Motor neuron (in vitro differentiated cells): ENCODE measurements at regions of chr1 and their contacts with region 1.

Region 1: GRCh38 chr1:214637722-214638458 is 34.9 kb downstream of the CENPF start:
- ATAC-seq: peak in 3 of 8 experiments; percentile 55 to 65 (median 63)
- H3K4me3 ChIP-seq: no peak overlapping the region
- H3K27ac ChIP-seq: no peak overlapping the region
- H3K4me1 ChIP-seq: peaks cover 0 to 13% of the 10 kb centered on the region in 2 donors

Region 2: GRCh38 chr1:214224611-214225354 is 413.1 kb before region 1 on chr1:
- in situ Hi-C with region 1: loop called in 1 of 9 experiments (anchors 25 kb)
- ATAC-seq: peak; percentile 64 to 91 (median 86)
- H3K4me3 ChIP-seq: peak overlapping the region in 3 of 5 donors; percentile 2 to 5 (median 3)
- H3K27ac ChIP-seq: peak overlapping the region in 1 of 2 donors; percentile 13
- H3K4me1 ChIP-seq: peaks cover 10 to 12% of the 10 kb centered on the region in 2 donors

Region 3: GRCh38 chr1:215517441-215517891 is 879.6 kb after region 1 on chr1:
- in situ Hi-C with region 1: loop called in 1 of 9 experiments (anchors 25 kb)
- ATAC-seq: peak in 7 of 8 experiments; percentile 52 to 96 (median 77)
- H3K4me3 ChIP-seq: no peak overlapping the region
- H3K27ac ChIP-seq: no peak overlapping the region
- H3K4me1 ChIP-seq: peaks cover 0 to 3% of the 10 kb centered on the region in 2 donors